ENCODE measurements at regions of chr20 and their contacts with region 1.

Region 1: GRCh38 chr20:49245921-49246740 is 26.9 kb downstream of the DDX27 start:
- DNase-seq: peak in 4 of 5 donors; percentile 12 to 38 (median 32)
- H3K4me3 ChIP-seq: no peak overlapping the region
- H3K4me3 Mint-ChIP-seq: no peak overlapping the region
- H3K27ac ChIP-seq: no peak overlapping the region
- H3K27ac Mint-ChIP-seq: peak overlapping the region; percentile 4 to 61 (median 34)
- H3K4me1 ChIP-seq: no peaks in the 10 kb centered on the region
- H3K4me1 Mint-ChIP-seq: peaks cover 5 to 8% (median 7%) of the 10 kb centered on the region in 4 donors
- H3K27me3 ChIP-seq: no peaks in the 10 kb centered on the region
- H3K27me3 Mint-ChIP-seq: no peaks in the 10 kb centered on the region

Region 2: DNA sequence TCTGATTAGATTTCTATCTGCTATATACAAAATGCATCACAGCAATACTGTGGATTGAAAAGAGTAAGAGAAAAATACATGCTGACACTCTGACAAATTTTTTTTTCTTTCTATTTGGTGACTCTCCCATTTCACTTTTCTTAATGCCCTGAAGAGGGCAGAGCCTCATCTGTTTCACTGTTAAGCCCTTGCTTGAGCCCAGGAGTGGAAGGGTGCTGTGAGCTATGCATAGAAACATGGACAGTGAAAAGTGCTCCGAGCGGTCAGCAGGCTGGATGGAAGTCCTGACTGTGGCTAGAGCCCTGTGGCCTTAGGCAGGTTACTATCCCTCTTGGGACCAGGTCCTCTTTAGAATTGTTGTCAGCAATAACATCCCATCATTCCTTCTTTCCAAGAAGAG is 217.4 kb before region 1 on chr20:
- CTCF ChIA-PET with region 1: no interaction called
- POLR2A ChIA-PET with region 1: no interaction called
- intact Hi-C with region 1: no loop called
- DNase-seq: no peak
- H3K4me3 ChIP-seq: no peak overlapping the region
- H3K4me3 Mint-ChIP-seq: no peak overlapping the region
- H3K27ac ChIP-seq: no peak overlapping the region
- H3K27ac Mint-ChIP-seq: no peak overlapping the region
- H3K4me1 ChIP-seq: no peaks in the 10 kb centered on the region
- H3K4me1 Mint-ChIP-seq: no peaks in the 10 kb centered on the region
- H3K27me3 ChIP-seq: no peaks in the 10 kb centered on the region
- H3K27me3 Mint-ChIP-seq: no peaks in the 10 kb centered on the region

Region 3: DNA sequence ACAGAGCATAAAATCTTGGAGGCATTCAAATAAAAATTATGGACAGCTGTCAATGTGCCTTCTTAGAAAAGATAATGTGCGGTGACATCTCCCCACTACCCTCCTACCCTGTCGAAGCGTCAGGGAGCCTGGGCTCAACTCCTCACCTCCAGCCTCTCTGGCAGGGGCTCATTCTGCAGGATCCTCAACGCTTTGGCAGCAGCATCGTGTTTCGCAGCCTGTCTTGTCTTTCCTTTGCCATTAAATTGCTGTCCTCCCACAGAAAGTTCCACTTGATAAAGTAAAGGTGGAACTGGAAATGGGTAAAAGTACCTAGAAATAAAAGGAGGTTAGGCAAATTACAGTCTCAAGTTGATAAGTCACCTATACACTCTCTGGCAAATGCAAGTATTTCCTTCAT is 94.7 kb before region 1 on chr20:
- CTCF ChIA-PET with region 1: no interaction called
- POLR2A ChIA-PET with region 1: no interaction called
- intact Hi-C with region 1: no loop called
- DNase-seq: no peak
- H3K4me3 ChIP-seq: no peak overlapping the region
- H3K4me3 Mint-ChIP-seq: no peak overlapping the region
- H3K27ac ChIP-seq: no peak overlapping the region
- H3K27ac Mint-ChIP-seq: peak overlapping the region in 2 of 7 donors; percentile 29 to 86
- H3K4me1 ChIP-seq: no peaks in the 10 kb centered on the region
- H3K4me1 Mint-ChIP-seq: peaks cover 8 to 37% (median 13%) of the 10 kb centered on the region in 4 donors
- H3K27me3 ChIP-seq: no peaks in the 10 kb centered on the region
- H3K27me3 Mint-ChIP-seq: no peaks in the 10 kb centered on the region

Region 4: DNA sequence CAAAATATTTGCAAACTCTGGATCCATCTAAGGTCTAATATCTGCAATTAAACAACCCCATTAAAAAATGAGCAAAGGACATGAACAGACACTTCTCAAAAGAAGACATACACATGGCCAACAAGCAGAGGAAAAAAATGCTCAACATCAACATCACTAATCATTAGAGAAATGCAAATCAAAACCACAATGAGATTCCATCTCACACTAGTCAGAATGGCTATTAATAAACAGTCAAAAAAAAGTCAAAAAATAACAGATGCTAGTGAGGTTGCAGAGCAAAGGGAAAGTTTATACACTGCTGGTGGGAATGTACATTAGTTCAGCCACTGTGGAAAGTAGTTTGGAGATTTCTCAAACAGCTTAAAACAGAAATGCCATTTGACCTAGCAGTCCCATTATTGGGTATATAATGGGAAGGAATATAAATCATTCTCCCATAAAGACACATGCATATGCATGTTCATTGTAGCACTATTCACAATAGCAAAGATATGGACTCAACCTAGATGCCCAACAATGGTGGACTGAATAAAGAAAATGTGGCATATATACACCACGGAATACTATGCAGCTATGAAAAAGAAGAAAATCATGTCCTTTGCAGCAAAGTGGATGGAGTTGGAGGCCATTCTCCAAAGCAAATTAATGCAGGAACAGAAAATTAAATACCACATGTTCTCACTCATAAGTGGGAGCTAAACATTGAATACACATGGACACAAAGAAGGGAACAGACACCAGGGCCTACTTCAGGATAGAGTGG is 22.7 kb after region 1 on chr20:
- CTCF ChIA-PET with region 1: interaction called, 11 read pairs
- POLR2A ChIA-PET with region 1: interaction called, 3 read pairs
- intact Hi-C with region 1: no loop called
- DNase-seq: no peak
- H3K4me3 ChIP-seq: peak overlapping the region in 1 of 2 donors; percentile 44
- H3K4me3 Mint-ChIP-seq: peak overlapping the region; percentile 30 to 87 (median 78)
- H3K27ac ChIP-seq: no peak overlapping the region
- H3K27ac Mint-ChIP-seq: peak overlapping the region; percentile 25 to 81 (median 53)
- H3K4me1 ChIP-seq: peaks cover 79% of the 10 kb centered on the region
- H3K4me1 Mint-ChIP-seq: peaks cover 51 to 83% (median 68%) of the 10 kb centered on the region in 4 donors
- H3K27me3 ChIP-seq: no peaks in the 10 kb centered on the region
- H3K27me3 Mint-ChIP-seq: no peaks in the 10 kb centered on the region

Region 5: GRCh38 chr20:49323622-49324238 is 77.6 kb after region 1 on chr20:
- CTCF ChIA-PET with region 1: interaction called, 37 read pairs
- POLR2A ChIA-PET with region 1: interaction called, 4 read pairs
- intact Hi-C with region 1: loop called (anchors 1 kb)
- DNase-seq: peak; percentile 40 to 68 (median 60)
- H3K4me3 ChIP-seq: no peak overlapping the region
- H3K4me3 Mint-ChIP-seq: peak overlapping the region in 2 of 8 donors; percentile 14 to 51
- H3K27ac ChIP-seq: no peak overlapping the region
- H3K27ac Mint-ChIP-seq: peak overlapping the region in 6 of 7 donors; percentile 22 to 96 (median 92)
- H3K4me1 ChIP-seq: peaks cover 22% of the 10 kb centered on the region
- H3K4me1 Mint-ChIP-seq: peaks cover 18 to 27% (median 21%) of the 10 kb centered on the region in 4 donors
- H3K27me3 ChIP-seq: peaks cover 9% of the 10 kb centered on the region
- H3K27me3 Mint-ChIP-seq: peaks cover 19 to 30% of the 10 kb centered on the region in 2 donors

Measured in CD4-positive, alpha-beta memory T cell (primary cell).